Activated B cell treated with CpG ODN at 0.5 μM for 24 hours (primary cell): ENCODE measurements at regions of chr11 and their contacts with region 1.

Region 1: GRCh38 chr11:118359295-118359958 is at the start of gene UBE4A:
- DNase-seq: peak; percentile 93
- ATAC-seq: peak; percentile 86
- H3K4me3 Mint-ChIP-seq: peak within 1 kb of the TSS; percentile 98
- H3K27ac Mint-ChIP-seq: peak within 1 kb of the TSS; percentile 94
- H3K4me1 Mint-ChIP-seq: peaks cover 39% of the 10 kb centered on the region
- H3K27me3 Mint-ChIP-seq: no peaks in the 10 kb centered on the region
- CTCF ChIP-seq: no peak
- total RNA-seq, gene UBE4A: 28.4 and 34.2 TPM in 2 replicates

Region 2: GRCh38 chr11:118126082-118126838 is 233.2 kb before region 1 on chr11:
- CTCF ChIA-PET with region 1: no interaction called
- POLR2A ChIA-PET with region 1: no interaction called
- intact Hi-C with region 1: no loop called
- DNase-seq: no peak
- ATAC-seq: no peak
- H3K4me3 Mint-ChIP-seq: no peak overlapping the region
- H3K27ac Mint-ChIP-seq: no peak overlapping the region
- H3K4me1 Mint-ChIP-seq: no peaks in the 10 kb centered on the region
- H3K27me3 Mint-ChIP-seq: peaks cover 12% of the 10 kb centered on the region
- CTCF ChIP-seq: no peak

Region 3: GRCh38 chr11:118251858-118252652 is 107.4 kb before region 1 on chr11 and contains the start of gene MPZL3:
- CTCF ChIA-PET with region 1: interaction called, 3 read pairs
- POLR2A ChIA-PET with region 1: interaction called, 3 read pairs
- intact Hi-C with region 1: loop called (anchors 1 kb)
- DNase-seq: peak; percentile 72
- ATAC-seq: peak; percentile 76
- H3K4me3 Mint-ChIP-seq: peak within 1 kb of the TSS; percentile 98
- H3K27ac Mint-ChIP-seq: peak within 1 kb of the TSS; percentile 99
- H3K4me1 Mint-ChIP-seq: peaks cover 17% of the 10 kb centered on the region
- H3K27me3 Mint-ChIP-seq: peaks cover 21% of the 10 kb centered on the region
- CTCF ChIP-seq: no peak
- total RNA-seq, gene MPZL3: 2.9 and 3.7 TPM in 2 replicates

Region 4: DNA sequence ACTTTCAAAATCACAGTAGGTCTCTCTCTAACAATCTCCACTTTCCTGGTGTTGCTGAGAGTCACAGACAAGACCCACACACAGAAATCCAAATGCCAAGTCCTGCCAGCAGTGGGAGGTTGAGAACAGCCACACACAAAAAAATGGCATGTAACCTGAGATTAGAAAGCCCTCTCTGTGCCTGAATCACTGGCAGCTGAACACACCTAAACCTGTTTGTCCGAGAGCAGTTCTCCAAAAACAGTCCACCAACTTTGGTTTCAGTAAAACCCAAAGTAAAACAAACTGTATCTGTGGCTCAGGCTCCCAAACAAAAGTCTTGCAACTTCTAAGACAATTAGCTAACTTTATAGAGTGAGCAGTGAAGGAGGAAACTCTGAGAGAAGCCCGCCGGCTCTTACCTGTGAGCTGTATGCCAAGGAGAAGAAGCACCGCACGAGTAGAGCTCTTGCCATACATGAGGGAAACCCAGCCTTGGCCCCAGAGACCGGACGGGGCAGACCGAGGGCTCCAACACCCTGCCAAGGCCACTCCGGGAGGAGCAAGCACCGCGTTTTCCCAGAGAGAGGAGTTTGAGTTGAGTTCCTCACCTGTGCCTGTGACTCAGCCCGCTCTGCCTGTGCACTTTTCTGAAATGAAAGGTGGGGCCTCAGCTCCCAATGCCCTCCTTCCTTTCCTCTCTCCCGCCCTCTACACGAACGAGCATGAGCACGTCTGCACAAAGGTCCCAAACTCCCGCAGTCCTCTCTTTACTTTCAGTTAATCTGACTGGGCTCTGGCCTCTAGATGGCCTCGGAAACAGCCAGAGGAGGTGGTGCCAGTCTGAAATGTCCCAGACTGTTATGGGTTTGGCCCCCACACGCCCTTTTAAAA is 95.5 kb before region 1 on chr11 and contains the start of gene MPZL2:
- CTCF ChIA-PET with region 1: no interaction called
- POLR2A ChIA-PET with region 1: interaction called, 11 read pairs
- intact Hi-C with region 1: no loop called
- DNase-seq: no peak
- ATAC-seq: peak; percentile 68
- H3K4me3 Mint-ChIP-seq: peak within 1 kb of the TSS; percentile 64
- H3K27ac Mint-ChIP-seq: no peak within 1 kb of the TSS
- H3K4me1 Mint-ChIP-seq: peaks cover 15% of the 10 kb centered on the region
- H3K27me3 Mint-ChIP-seq: peaks cover 47% of the 10 kb centered on the region
- CTCF ChIP-seq: no peak
- total RNA-seq, gene MPZL2: 0.29 TPM in 1 of 2 replicates, not detected in the other

Region 5: GRCh38 chr11:118401151-118401878 is 41.9 kb after region 1 on chr11 and contains the start of gene ATP5MG:
- CTCF ChIA-PET with region 1: no interaction called
- POLR2A ChIA-PET with region 1: no interaction called
- intact Hi-C with region 1: loop called (anchors 1 kb)
- DNase-seq: peak; percentile 77
- ATAC-seq: peak; percentile 84
- H3K4me3 Mint-ChIP-seq: peak within 1 kb of the TSS; percentile 97
- H3K27ac Mint-ChIP-seq: peak within 1 kb of the TSS; percentile 100
- H3K4me1 Mint-ChIP-seq: peaks cover 56% of the 10 kb centered on the region
- H3K27me3 Mint-ChIP-seq: no peaks in the 10 kb centered on the region
- CTCF ChIP-seq: no peak
- total RNA-seq, gene ATP5MG: 199 and 230 TPM in 2 replicates

Region 6: DNA sequence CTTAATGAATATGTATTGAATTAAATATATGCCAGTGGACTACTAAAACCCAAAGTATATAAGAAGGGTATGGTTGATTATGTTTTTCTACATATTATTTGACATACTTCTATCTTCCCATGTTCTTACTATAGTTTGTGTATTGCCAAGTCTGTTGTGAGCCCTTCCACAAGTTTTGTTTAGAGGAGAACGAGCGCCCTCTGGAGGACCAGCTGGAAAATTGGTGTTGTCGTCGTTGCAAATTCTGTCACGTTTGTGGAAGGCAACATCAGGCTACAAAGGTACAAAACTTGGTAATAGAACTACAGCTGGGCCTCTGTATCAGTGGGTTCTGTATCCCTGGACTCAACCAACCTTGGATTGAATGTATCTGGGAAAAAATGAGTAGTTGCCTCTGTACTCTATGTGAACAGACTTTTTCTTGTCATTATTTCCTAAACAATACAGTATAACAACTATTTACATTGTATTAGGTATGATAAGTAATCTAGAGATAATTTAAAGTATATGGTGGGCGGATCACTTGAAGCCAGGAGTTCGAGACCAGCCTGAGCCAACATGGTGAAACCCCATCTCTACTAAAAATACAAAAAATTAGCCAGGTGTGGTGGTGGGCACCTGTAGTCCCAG is 129.2 kb after region 1 on chr11:
- CTCF ChIA-PET with region 1: no interaction called
- POLR2A ChIA-PET with region 1: no interaction called
- intact Hi-C with region 1: loop called (anchors 2 kb)
- DNase-seq: peak; percentile 46
- ATAC-seq: peak; percentile 72
- H3K4me3 Mint-ChIP-seq: no peak overlapping the region
- H3K27ac Mint-ChIP-seq: no peak overlapping the region
- H3K4me1 Mint-ChIP-seq: no peaks in the 10 kb centered on the region
- H3K27me3 Mint-ChIP-seq: no peaks in the 10 kb centered on the region
- CTCF ChIP-seq: peak; percentile 41

Region 7: DNA sequence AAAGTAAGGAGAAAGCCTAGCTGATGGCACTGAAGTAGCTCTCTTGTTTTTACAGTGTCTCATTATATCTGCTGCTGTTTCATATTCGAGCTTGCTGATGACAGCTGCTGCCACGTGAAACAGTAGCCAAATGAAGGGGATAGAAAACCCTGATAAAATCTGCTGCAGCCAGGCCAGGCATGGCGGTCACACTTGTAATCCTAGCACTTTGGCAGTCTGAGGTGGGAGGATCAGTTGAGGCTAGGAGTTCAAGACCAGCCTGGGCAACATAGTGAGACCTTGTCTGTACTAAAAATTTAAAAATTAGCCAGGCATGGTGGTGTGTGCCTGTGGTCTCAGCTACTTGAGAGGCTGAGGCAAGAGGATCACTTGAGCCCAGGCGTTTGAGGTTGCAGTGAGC is 192.9 kb after region 1 on chr11:
- CTCF ChIA-PET with region 1: no interaction called
- POLR2A ChIA-PET with region 1: no interaction called
- intact Hi-C with region 1: no loop called
- DNase-seq: no peak
- ATAC-seq: no peak
- H3K4me3 Mint-ChIP-seq: no peak overlapping the region
- H3K27ac Mint-ChIP-seq: no peak overlapping the region
- H3K4me1 Mint-ChIP-seq: no peaks in the 10 kb centered on the region
- H3K27me3 Mint-ChIP-seq: no peaks in the 10 kb centered on the region
- CTCF ChIP-seq: no peak

Region 8: GRCh38 chr11:118572061-118572980 is 212.9 kb after region 1 on chr11 and contains the start of gene ARCN1:
- CTCF ChIA-PET with region 1: no interaction called
- POLR2A ChIA-PET with region 1: no interaction called
- intact Hi-C with region 1: loop called (anchors 2 kb)
- DNase-seq: peak; percentile 67
- ATAC-seq: peak; percentile 88
- H3K4me3 Mint-ChIP-seq: peak within 1 kb of the TSS; percentile 93
- H3K27ac Mint-ChIP-seq: peak within 1 kb of the TSS; percentile 86
- H3K4me1 Mint-ChIP-seq: peaks cover 45% of the 10 kb centered on the region
- H3K27me3 Mint-ChIP-seq: no peaks in the 10 kb centered on the region
- CTCF ChIP-seq: no peak
- total RNA-seq, gene ARCN1: 91.3 and 94.7 TPM in 2 replicates